ENCODE measurements at regions of chr12 and their contacts with region 1.

Region 1: DNA sequence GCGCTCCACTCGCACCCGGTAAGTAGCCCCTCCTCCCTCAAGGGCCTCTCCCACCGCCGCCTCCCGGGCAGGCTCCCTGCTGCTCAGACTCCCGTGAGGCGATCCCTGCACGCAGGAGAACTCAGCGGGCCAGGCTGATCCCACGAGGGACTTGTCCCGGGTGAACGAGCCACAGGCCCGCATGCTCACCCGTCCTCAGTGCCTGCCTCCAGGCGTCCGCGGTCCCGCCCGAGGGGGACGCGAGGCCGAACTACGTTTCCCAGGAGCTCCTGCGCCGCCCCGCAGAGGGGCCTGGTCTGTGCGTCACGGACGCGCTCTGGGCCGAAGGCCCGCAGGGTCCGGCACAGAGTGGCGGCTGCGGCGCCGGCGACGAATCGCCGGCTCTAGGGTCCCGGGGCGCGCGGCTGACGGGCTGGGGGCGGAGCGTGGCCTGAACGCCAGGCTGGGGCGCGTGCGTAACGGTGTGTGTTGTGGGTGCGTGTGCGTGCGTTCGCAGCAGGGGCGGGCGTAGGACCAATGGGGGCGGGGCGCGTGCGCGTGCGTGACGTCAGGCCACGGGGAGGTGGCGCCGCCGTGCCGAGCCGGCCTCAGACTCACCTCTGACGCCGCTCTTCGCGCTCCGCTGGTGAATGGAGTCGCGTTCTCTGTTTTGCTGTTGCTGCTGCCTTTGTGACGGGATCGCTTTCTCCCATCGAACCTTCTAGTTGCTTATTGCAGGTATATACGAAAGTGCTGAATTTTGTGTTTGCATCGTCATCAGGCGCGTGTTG is at the starts of genes ZNF10 and ZNF891:
- DNase-seq: peak; percentile 97 to 99 (median 98)
- ATAC-seq: peak; percentile 99
- H3K4me3 ChIP-seq: peak within 1 kb of the TSS; percentile 45
- H3K4me1 ChIP-seq: peaks cover 6% of the 10 kb centered on the region
- CTCF ChIP-seq: no peak
- total RNA-seq, gene ZNF10: 5.4 to 13.8 (median 6.1) TPM
- total RNA-seq, gene ZNF891: 1.4 to 4.3 (median 2.3) TPM

Region 2: DNA sequence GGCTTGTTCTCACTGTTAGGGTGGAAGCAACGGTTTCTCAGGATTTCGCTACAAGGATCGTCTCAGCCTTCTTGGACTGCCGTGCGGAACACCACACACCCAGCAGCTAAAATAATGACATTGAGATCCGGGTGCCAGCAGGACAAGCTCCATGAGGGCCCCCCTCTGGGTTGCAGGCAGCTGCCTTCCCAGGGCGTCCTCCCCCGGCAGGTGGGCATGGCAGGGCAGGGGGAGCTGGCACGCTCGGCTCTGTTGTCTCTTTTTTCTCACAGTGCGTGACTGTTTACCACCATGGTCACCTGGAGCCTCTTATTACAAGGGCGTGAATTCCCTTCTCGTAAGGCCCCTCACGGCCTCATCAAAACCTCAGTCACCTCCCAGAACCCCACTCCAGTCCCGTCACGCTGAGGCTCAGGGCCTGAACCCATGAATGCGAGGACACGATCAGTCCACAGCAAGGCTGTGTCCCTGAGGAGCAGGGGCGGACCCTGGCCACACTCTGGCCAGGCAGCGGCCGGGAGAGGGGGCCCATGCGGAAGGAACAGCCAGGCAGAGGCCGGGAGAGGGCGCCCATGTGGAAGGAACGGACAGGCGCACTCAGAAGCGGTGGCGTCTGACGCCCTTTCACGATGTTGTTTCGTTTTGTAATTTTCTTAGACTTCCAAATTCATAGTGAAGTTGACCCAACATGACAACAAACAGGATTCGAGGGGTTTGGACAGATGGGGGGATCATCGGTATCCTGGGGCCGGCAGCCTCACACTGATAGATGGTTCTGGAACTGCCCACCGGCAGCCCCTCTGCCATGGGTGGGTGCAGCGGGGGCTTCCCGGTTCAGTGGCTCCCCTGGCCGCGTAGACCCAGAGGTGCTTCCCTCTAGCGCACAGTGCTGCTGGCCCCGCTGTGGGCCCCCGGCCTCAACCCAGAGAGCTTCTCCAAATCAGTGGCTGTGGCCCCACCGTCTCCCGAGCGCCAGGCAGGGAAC is 529.9 kb before region 1 on chr12:
- intact Hi-C with region 1: no loop called
- DNase-seq: peak; percentile 70 to 82 (median 75)
- ATAC-seq: peak; percentile 72
- H3K4me3 ChIP-seq: no peak overlapping the region
- H3K4me1 ChIP-seq: peaks cover 33% of the 10 kb centered on the region
- CTCF ChIP-seq: peak; percentile 29

Region 3: DNA sequence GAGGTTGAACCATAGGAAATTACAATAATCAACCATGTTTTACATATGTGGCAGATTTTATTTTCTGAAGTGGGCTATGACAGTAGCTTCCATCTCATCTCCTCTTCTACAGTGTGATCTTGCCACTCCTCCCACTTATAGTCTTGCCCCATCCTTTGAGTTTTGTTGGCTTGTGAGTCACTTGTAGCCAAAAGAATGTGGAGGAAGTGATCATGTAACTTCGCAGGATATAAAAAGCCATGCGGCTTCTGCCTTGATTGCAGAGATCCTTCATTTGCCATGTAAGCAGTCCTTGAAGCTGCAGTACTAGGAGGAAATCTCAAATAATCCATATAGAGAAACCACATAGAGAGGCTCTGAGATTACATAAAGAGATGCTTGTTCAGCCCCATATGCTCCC is 106.7 kb before region 1 on chr12:
- intact Hi-C with region 1: no loop called
- DNase-seq: no peak
- ATAC-seq: no peak
- H3K4me3 ChIP-seq: no peak overlapping the region
- H3K4me1 ChIP-seq: no peaks in the 10 kb centered on the region
- CTCF ChIP-seq: no peak

Region 4: GRCh38 chr12:133080368-133081158 is 49.7 kb before region 1 on chr12 and contains the start of gene ZNF140:
- intact Hi-C with region 1: loop called in 1 of 2 experiments (anchors 2 kb)
- DNase-seq: peak; percentile 96 to 97 (median 96)
- ATAC-seq: peak; percentile 85
- H3K4me3 ChIP-seq: peak within 1 kb of the TSS; percentile 59
- H3K4me1 ChIP-seq: no peaks in the 10 kb centered on the region
- CTCF ChIP-seq: peak; percentile 5
- total RNA-seq, gene ZNF140: 10.7 to 14.1 (median 12.2) TPM